Common myeloid progenitor, CD34-positive (primary cell): ENCODE measurements at regions of chr14 and their contacts with region 1.

Region 1: GRCh38 chr14:20799892-20800544 is 2.6 kb downstream of the RNASE1 start:
- DNase-seq: peak in 2 of 3 donors; percentile 65 to 72
- H3K4me3 ChIP-seq: peak overlapping the region in 1 of 7 experiments; percentile 55
- H3K27ac ChIP-seq: peak overlapping the region in 1 of 2 experiments; percentile 76
- H3K4me1 ChIP-seq: peaks cover 2 to 40% (median 22%) of the 10 kb centered on the region in 4 experiments
- H3K27me3 ChIP-seq: no peaks in the 10 kb centered on the region

Region 2: DNA sequence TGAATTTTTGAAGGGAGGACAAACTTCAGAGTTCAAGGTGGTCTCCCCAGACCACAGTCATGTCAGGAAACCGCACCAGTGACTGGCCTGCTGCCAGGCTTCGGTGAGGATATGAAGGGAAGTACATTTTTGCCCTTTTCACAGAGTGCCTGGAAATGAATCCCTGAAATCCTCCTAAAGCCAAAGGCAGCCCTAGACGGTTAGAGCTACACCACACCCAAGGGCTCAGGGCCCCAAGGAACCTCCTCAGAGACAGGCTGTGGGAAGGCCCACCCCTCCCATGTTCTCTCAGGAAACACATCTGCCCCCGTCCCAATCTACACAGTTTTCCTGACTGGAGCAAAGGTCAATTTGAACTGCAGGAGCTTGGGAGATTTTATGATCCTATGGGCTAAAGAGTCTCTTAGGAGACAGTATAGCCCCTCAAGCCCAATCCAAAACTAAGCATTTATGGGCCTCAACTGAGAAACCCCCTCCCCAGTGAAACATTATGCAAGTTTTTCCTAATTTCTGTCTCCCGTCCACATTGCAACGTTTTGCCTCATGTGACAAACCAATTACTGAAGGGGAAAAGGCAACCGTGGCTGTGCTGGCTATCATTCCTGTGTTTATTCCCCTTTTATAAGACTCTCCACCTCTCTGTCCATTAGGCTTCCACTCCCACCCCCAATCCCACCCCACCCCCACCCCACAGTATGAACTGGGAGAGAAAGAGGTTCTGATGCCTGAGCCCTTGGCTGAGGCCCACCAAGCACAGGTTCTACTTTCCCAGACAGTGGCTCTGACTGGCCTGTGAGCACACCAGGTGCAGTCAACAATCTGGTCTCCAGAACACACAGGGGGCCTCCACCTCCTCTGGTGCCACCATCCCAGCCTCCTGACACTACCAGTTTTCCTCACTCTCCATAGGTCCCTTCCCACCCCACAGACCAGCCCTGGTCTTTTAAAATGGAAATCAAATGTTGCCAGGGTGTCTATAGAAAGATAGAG is 12.3 kb after region 1 on chr14:
- CTCF ChIA-PET with region 1: interaction called, 13 read pairs
- POLR2A ChIA-PET with region 1: no interaction called
- DNase-seq: peak in 2 of 3 donors; percentile 80 to 81
- H3K4me3 ChIP-seq: no peak overlapping the region
- H3K27ac ChIP-seq: no peak overlapping the region
- H3K4me1 ChIP-seq: peaks cover 3 to 40% (median 15%) of the 10 kb centered on the region in 4 experiments
- H3K27me3 ChIP-seq: no peaks in the 10 kb centered on the region